A549 (cell line): ENCODE measurements at regions of chr19 and their contacts with region 1.

Region 1: DNA sequence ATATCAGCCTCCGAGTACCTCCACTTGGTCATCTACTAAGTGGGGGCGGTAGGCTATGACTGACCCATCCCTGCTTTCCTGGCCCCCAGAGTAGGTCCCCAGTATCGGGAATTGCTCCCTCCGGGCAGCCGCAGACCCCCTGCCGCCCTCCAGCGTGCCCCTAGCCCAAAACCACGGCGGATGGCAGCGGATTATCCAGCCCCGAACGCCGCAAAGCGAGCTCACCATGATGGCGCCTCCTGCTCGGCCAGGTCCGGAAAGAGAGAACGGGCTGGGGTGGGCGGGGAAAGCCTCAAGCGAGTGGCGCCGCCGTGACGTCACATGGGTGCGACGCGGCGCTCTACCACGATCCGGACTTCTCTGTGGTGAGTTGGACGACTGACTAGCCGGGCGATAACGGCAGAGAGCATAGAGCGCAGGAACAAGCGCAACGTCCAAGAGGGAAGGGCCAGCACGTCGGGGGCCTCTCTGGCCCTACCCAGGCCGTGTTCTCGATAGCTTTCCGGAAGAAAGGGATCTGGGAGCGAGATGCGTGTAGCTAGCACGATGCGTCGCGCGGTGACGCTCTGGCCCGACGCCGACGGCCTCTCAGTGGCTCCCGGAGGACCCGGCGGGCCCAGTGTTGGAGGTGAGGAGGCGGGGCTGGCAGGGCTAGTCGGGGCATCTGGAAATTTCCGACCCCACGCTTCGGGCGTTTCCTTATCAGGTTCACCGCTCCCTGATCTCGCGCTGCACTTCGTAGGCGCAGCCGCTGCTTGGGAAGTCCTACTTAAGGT is at the starts of genes RPL18 and SPHK2:
- DNase-seq: peak; percentile 99 to 100
- ATAC-seq: peak; percentile 79 to 89
- H3K4me3 ChIP-seq: peak within 1 kb of the TSS; percentile 68
- H3K27ac ChIP-seq: peak within 1 kb of the TSS; percentile 89 to 90
- H3K4me1 ChIP-seq: peaks cover 50% of the 10 kb centered on the region
- CTCF ChIP-seq: no peak
- EP300 ChIP-seq: peak in 1 of 2 experiments; percentile 34; a peak in 2 of 5 replicates
- POLR2A ChIP-seq: peak; percentile 98
- RAD21 ChIP-seq: no peak; a peak in 1 of 5 replicates
- polyA plus RNA-seq, gene RPL18: 1,390 and 1,780 TPM in 2 replicates
- polyA plus RNA-seq, gene SPHK2: 5.5 and 6.1 TPM in 2 replicates

Region 2: GRCh38 chr19:48363810-48364563 is 255.1 kb before region 1 on chr19 and contains the starts of genes SYNGR4 and TMEM143:
- CTCF ChIA-PET with region 1: no interaction called
- POLR2A ChIA-PET with region 1: interaction called, 18 read pairs
- DNase-seq: peak; percentile 100
- ATAC-seq: peak; percentile 75 to 89
- H3K4me3 ChIP-seq: peak within 1 kb of the TSS; percentile 51
- H3K27ac ChIP-seq: peak within 1 kb of the TSS; percentile 90 to 97
- H3K4me1 ChIP-seq: peaks cover 8% of the 10 kb centered on the region
- CTCF ChIP-seq: no peak
- EP300 ChIP-seq: no peak
- POLR2A ChIP-seq: peak; percentile 70
- RAD21 ChIP-seq: no peak
- polyA plus RNA-seq, gene SYNGR4: 2.3 and 2.9 TPM in 2 replicates
- polyA plus RNA-seq, gene TMEM143: 7.4 and 7.6 TPM in 2 replicates

Region 3: GRCh38 chr19:48600679-48601417 is 18.3 kb before region 1 on chr19:
- CTCF ChIA-PET with region 1: interaction called, 396 read pairs
- POLR2A ChIA-PET with region 1: interaction called, 10 read pairs
- DNase-seq: no peak
- ATAC-seq: no peak
- H3K4me3 ChIP-seq: no peak overlapping the region
- H3K27ac ChIP-seq: peak overlapping the region in 1 of 2 experiments; percentile 77; a peak in 1 of 6 replicates
- H3K4me1 ChIP-seq: peaks cover 14% of the 10 kb centered on the region
- CTCF ChIP-seq: no peak
- EP300 ChIP-seq: no peak
- POLR2A ChIP-seq: no peak
- RAD21 ChIP-seq: no peak

Region 4: GRCh38 chr19:48608798-48609263 is 10.3 kb before region 1 on chr19:
- CTCF ChIA-PET with region 1: interaction called, 55 read pairs
- POLR2A ChIA-PET with region 1: interaction called, 70 read pairs
- DNase-seq: peak; percentile 83 to 88
- ATAC-seq: peak; percentile 75 to 82
- H3K4me3 ChIP-seq: no peak overlapping the region
- H3K27ac ChIP-seq: peak overlapping the region; percentile 65 to 78
- H3K4me1 ChIP-seq: peaks cover 5% of the 10 kb centered on the region; the same call in 1 of the 3 replicates
- CTCF ChIP-seq: peak; percentile 92
- EP300 ChIP-seq: no peak
- POLR2A ChIP-seq: no peak
- RAD21 ChIP-seq: peak; percentile 94 to 98

Region 5: DNA sequence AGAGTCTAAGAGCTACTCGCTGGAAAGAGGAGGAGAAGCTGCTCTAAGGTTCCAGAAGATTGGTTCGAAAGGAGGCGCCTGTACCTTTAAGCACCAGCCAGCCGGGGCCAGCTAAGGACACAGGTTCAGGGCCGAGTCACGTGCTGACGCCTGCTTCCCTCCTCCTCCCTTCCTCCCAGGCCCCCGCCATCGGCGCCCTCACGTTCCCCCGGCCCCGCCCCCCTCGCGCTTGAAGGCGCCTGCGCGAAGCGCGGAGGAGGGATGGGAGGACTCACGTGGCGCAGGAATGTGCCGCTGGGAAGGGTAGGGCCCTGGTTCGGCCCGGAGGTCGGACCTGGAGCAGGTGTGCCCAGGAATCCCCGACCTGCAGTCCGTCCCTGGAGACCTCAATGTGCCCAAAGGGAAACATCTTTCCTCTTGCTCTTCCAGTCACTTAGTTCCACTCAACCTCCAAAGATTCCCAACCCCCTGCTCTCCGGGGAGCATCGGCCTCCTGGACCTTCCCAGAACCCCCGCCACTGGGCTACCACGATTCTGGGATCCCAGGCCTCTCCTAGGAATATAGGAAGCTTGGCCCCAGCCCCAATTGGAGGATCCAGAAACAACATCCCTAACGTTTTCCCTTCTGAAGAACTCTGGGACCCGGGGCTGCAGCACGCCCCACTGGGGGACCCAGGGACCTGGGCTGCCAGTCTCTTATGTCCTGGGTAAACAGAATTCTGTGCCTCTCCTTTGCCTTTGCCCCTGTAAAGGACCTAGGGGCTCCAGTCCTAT is 15.5 kb after region 1 on chr19:
- CTCF ChIA-PET with region 1: interaction called, 5 read pairs
- POLR2A ChIA-PET with region 1: interaction called, 19 read pairs
- DNase-seq: peak; percentile 91 to 99
- ATAC-seq: peak; percentile 21 to 52
- H3K4me3 ChIP-seq: peak overlapping the region; percentile 71
- H3K27ac ChIP-seq: peak overlapping the region; percentile 86 to 92
- H3K4me1 ChIP-seq: peaks cover 55% of the 10 kb centered on the region
- CTCF ChIP-seq: no peak
- EP300 ChIP-seq: peak in 1 of 2 experiments; percentile 49; a peak in 1 of 5 replicates
- POLR2A ChIP-seq: peak; percentile 67
- RAD21 ChIP-seq: no peak